ENCODE measurements at regions of chr16 and their contacts with region 1.

Region 1: GRCh38 chr16:56317998-56318826 is 107.1 kb downstream of the AMFR start:
- DNase-seq: peak; percentile 69 to 82 (median 75)
- H3K4me3 ChIP-seq: peak overlapping the region in 5 of 7 experiments; percentile 8 to 57 (median 53)
- H3K27ac ChIP-seq: no peak overlapping the region
- H3K4me1 ChIP-seq: peaks cover 0 to 13% (median 12%) of the 10 kb centered on the region in 4 experiments
- H3K27me3 ChIP-seq: peaks cover 0 to 5% (median 0%) of the 10 kb centered on the region in 5 experiments

Region 2: DNA sequence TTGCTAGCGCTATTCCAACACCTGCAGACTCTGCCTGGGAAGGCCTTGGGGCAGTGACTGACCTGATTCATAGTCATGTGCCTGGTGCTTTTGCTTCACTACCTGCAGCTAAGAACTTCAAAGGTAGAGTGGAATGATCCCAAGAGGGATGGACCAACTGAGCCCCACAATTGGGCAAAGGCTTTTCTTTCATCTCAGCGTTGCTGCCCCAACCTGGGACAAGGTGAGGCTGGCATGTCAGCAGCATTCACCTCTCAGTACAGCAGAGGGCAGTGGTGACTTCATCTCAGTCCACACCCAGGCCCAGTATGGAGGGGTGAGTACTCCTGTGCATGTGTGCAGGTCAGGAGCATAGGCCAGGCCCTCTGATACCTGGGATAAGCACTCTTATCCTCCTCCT is 276.5 kb before region 1 on chr16:
- CTCF ChIA-PET with region 1: interaction called, 66 read pairs
- POLR2A ChIA-PET with region 1: no interaction called
- DNase-seq: peak; percentile 38 to 63 (median 58)
- H3K4me3 ChIP-seq: no peak overlapping the region
- H3K27ac ChIP-seq: no peak overlapping the region
- H3K4me1 ChIP-seq: no peaks in the 10 kb centered on the region
- H3K27me3 ChIP-seq: peaks cover 0 to 5% (median 0%) of the 10 kb centered on the region in 5 experiments

Region 3: GRCh38 chr16:56087661-56088060 is 230.6 kb before region 1 on chr16:
- CTCF ChIA-PET with region 1: no interaction called
- POLR2A ChIA-PET with region 1: no interaction called
- DNase-seq: no peak
- H3K4me3 ChIP-seq: no peak overlapping the region
- H3K27ac ChIP-seq: no peak overlapping the region
- H3K4me1 ChIP-seq: no peaks in the 10 kb centered on the region
- H3K27me3 ChIP-seq: peaks cover 0 to 5% (median 0%) of the 10 kb centered on the region in 5 experiments

Region 4: DNA sequence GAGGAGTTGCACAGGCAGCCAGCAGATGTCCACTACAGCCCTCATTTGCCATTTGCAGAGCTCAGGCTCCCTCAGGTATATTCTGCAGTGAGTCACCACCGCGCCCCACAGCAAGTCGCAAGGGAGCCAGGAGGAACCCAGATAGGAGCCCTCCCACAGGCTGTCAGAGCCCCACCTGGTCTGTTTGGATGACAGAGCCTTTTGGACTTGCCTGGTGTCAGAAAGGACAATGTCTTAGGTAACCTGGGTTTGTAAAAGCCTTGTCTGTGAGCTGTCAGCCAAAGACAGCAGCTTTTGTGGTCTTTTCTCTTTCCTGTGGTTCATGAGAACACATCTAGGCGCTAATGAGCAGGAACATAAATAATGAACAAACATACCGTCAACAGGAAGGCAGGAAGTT is 56.1 kb before region 1 on chr16:
- CTCF ChIA-PET with region 1: interaction called, 11 read pairs
- POLR2A ChIA-PET with region 1: no interaction called
- DNase-seq: peak; percentile 25 to 89 (median 81)
- H3K4me3 ChIP-seq: peak overlapping the region in 3 of 7 experiments; percentile 18 to 45 (median 32)
- H3K27ac ChIP-seq: no peak overlapping the region
- H3K4me1 ChIP-seq: peaks cover 3 to 32% (median 26%) of the 10 kb centered on the region in 4 experiments
- H3K27me3 ChIP-seq: no peaks in the 10 kb centered on the region

Region 5: GRCh38 chr16:56300891-56301850 is 17.0 kb before region 1 on chr16:
- CTCF ChIA-PET with region 1: interaction called, 29 read pairs
- POLR2A ChIA-PET with region 1: no interaction called
- DNase-seq: peak; percentile 60 to 92 (median 88)
- H3K4me3 ChIP-seq: peak overlapping the region in 1 of 7 experiments; percentile 23
- H3K27ac ChIP-seq: no peak overlapping the region
- H3K4me1 ChIP-seq: peaks cover 0 to 66% (median 51%) of the 10 kb centered on the region in 4 experiments
- H3K27me3 ChIP-seq: no peaks in the 10 kb centered on the region

Region 6: DNA sequence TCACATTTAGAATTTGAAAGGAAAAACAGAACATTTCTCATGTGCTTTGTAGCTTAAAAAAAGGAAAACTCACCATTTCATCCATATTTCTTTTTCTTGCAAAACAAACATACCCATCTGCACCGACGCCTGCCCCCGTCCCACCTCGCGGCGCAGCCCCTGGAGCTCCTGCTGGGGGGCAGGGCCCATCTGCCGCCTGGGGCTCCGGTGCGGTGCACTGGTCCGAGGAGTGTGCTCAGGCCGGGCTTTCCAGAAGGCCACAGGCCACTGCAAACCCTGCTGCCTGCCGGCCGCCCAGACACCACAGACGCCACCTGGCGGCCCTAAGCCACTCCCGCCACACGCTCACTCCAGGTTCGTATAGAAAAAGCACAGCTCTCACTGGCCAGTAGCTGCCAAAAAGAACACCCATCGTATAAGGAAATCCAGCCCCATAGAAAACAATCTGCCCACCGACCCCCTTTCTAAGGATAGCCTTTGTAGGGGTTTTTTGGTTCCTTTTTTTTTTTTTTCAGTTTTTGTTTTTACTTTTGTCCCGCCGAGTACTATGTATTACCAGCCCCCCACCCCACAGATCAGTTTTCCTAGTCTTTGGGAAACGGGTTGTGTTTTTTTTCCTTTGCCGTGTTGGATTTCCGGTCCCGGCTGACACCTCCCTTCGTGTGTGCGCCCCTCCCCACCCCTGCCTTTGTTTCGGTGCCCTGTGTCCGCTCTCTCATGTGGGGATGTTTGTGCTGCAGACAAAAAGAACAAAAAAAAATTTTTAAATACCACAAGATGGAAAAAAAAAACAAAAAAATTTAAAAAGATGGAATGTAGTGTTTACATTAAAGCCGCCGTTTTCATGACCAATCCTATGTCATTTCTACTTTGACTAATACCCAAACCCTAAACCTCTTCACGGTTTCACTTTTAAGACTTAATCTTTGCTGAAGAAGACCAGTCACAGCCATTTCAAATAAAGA is 38.3 kb after region 1 on chr16:
- CTCF ChIA-PET with region 1: interaction called, 14 read pairs
- POLR2A ChIA-PET with region 1: no interaction called
- DNase-seq: peak; percentile 59 to 80 (median 74)
- H3K4me3 ChIP-seq: peak overlapping the region in 6 of 7 experiments; percentile 56 to 87 (median 77)
- H3K27ac ChIP-seq: peak overlapping the region in 1 of 2 experiments; percentile 68
- H3K4me1 ChIP-seq: peaks cover 5 to 28% (median 12%) of the 10 kb centered on the region in 4 experiments
- H3K27me3 ChIP-seq: no peaks in the 10 kb centered on the region